HCT116 (cell line): ENCODE measurements at regions of chr12 and their contacts with region 1.

Region 1: DNA sequence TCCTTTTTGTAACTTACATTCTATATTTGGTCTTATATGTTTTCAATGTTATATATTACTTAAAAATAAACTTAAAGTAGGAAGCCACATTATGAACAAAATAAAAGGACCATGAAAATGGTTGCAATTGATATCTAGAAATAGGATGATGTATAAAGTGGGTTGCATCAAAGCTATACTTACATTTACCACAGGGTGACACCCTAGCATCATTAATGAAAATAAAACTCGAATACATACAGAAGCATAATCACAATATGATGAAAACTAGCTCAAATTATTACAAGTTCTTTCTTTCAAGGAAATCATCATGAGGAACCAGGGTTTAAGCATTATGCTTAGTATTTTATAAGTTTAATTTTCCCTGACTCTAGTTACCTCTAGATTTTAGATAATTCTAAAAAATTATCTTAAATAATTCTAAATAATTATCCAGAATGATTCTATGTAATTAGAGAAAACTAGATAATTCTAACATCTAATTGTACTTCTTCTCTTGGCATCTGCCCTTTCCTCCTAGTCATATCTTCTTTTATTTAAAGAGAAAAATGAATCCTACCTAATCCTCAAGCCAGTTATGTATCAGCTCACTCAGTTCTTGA is 31.2 kb downstream of the TAS2R7 start:
- DNase-seq: peak; percentile 26
- ATAC-seq: peak; percentile 68
- H3K4me3 ChIP-seq: no peak overlapping the region
- H3K27ac ChIP-seq: no peak overlapping the region
- H3K4me1 ChIP-seq: no peaks in the 10 kb centered on the region
- H3K27me3 ChIP-seq: peaks cover 29% of the 10 kb centered on the region
- CTCF ChIP-seq: peak; percentile 39 to 88 (median 71); a peak in 4 of 6 replicates
- POLR2A ChIP-seq: no peak
- RAD21 ChIP-seq: peak; percentile 85

Region 2: DNA sequence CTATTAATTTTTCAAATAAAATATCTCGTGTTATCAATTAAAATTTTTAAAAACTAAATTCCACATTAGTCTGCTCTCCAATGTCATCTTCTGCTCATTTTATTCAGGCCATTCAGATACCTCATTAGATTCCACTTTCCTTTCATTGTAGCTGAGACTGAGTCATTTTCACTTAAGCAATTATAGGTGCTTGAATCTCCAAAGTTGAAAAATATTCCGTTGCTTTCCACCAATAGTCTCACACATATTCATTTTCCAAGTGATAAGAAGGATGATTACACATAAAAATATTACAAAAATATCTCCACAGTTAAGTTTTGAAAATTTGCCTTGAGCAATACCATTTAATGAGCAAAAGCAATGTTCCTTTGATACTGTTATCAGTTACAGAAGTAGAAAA is 11.6 kb before region 1 on chr12:
- CTCF ChIA-PET with region 1: interaction called, 13 read pairs
- POLR2A ChIA-PET with region 1: no interaction called
- RAD21 ChIA-PET with region 1: interaction called in 1 of 2 experiments, 3 read pairs
- intact Hi-C with region 1: no loop called
- DNase-seq: no peak
- ATAC-seq: no peak
- H3K4me3 ChIP-seq: no peak overlapping the region
- H3K27ac ChIP-seq: no peak overlapping the region
- H3K4me1 ChIP-seq: no peaks in the 10 kb centered on the region
- H3K27me3 ChIP-seq: no peaks in the 10 kb centered on the region
- CTCF ChIP-seq: no peak
- POLR2A ChIP-seq: no peak
- RAD21 ChIP-seq: no peak

Region 3: GRCh38 chr12:11202811-11203210 is 431.6 kb after region 1 on chr12:
- CTCF ChIA-PET with region 1: interaction called, 131 read pairs
- POLR2A ChIA-PET with region 1: no interaction called
- RAD21 ChIA-PET with region 1: interaction called, 9 to 19 read pairs
- intact Hi-C with region 1: loop called (anchors 1 kb)
- DNase-seq: no peak
- ATAC-seq: no peak
- H3K4me3 ChIP-seq: no peak overlapping the region
- H3K27ac ChIP-seq: no peak overlapping the region
- H3K4me1 ChIP-seq: no peaks in the 10 kb centered on the region
- H3K27me3 ChIP-seq: no peaks in the 10 kb centered on the region
- CTCF ChIP-seq: no peak
- POLR2A ChIP-seq: no peak
- RAD21 ChIP-seq: no peak

Region 4: GRCh38 chr12:11228296-11228879 is 457.2 kb after region 1 on chr12:
- CTCF ChIA-PET with region 1: interaction called, 17 read pairs
- POLR2A ChIA-PET with region 1: no interaction called
- RAD21 ChIA-PET with region 1: interaction called, 3 to 6 read pairs
- intact Hi-C with region 1: no loop called
- DNase-seq: peak; percentile 35
- ATAC-seq: peak; percentile 100
- H3K4me3 ChIP-seq: no peak overlapping the region
- H3K27ac ChIP-seq: no peak overlapping the region
- H3K4me1 ChIP-seq: no peaks in the 10 kb centered on the region
- H3K27me3 ChIP-seq: peaks cover 36% of the 10 kb centered on the region; the same call in 1 of the 2 replicates
- CTCF ChIP-seq: peak; percentile 78 to 89 (median 83)
- POLR2A ChIP-seq: no peak
- RAD21 ChIP-seq: peak; percentile 82

Region 5: DNA sequence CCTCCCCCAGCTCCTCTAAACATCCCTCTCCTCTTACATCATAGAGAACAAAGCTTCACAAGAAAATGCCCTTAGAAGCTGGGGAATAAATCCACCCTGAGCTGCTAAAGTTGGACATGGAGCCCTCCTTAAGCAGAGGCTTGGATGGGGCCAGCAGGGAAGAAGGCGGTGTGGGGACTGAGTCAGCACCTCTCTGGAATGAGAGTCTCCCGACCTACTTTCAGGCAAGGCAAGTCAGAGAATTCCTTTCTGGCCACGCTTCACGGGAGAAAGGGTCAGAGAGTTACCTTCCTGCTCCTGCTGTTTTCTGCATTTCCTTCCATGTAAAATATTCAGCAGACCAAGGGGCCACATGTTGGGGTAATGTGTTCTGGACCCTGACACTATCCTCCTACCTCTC is 737.5 kb after region 1 on chr12:
- CTCF ChIA-PET with region 1: interaction called, 12 read pairs
- POLR2A ChIA-PET with region 1: no interaction called
- RAD21 ChIA-PET with region 1: no interaction called
- intact Hi-C with region 1: no loop called
- DNase-seq: no peak
- ATAC-seq: no peak
- H3K4me3 ChIP-seq: no peak overlapping the region
- H3K27ac ChIP-seq: no peak overlapping the region
- H3K4me1 ChIP-seq: no peaks in the 10 kb centered on the region
- H3K27me3 ChIP-seq: peaks cover 56% of the 10 kb centered on the region
- CTCF ChIP-seq: no peak
- POLR2A ChIP-seq: no peak
- RAD21 ChIP-seq: no peak